BJ (cell line): ENCODE measurements at regions of chr1 and their contacts with region 1.

Region 1: DNA sequence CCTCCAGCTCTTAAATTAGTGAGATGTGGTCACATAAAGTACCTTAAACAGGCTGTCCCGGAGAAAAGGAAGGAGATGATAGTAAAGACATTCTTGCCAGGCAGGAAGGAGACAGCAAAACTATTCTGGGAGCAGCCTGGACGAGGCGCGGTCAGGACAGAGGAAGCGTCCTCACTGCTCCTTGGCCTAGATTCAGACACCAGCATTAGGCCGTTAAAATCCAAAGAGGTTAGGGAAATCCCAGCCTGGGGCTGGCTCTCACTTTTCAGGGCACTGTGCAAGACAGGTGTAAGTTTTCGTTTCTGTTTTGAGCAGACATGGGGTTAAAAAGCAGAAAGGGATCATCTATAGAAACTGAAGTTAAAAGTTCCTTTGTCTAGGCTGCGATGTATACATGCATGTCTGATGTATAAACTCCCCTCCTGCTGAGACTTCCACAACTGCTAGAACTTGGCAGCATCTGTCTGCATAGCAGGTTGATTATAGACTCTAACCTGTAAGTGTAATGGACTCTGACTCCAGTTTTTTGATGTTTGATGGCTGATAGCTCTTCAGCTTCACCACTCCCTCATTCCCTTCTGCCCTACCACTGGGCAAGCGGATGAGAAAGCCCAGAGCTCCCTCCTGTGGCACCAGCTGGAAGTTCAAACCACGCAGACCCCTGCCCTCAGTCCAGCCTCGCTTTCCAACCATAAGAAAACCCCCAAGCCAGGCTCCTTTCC is 21.5 kb downstream of the STPG1 start:
- DNase-seq: no peak
- H3K4me3 ChIP-seq: no peak overlapping the region
- H3K27me3 ChIP-seq: no peaks in the 10 kb centered on the region
- CTCF ChIP-seq: peak; percentile 84

Region 2: GRCh38 chr1:24150234-24151174 is 241.5 kb before region 1 on chr1:
- CTCF ChIA-PET with region 1: interaction called, 36 read pairs
- POLR2A ChIA-PET with region 1: no interaction called
- DNase-seq: no peak
- H3K4me3 ChIP-seq: no peak overlapping the region
- H3K27me3 ChIP-seq: peaks cover 9% of the 10 kb centered on the region
- CTCF ChIP-seq: peak; percentile 91

Region 3: DNA sequence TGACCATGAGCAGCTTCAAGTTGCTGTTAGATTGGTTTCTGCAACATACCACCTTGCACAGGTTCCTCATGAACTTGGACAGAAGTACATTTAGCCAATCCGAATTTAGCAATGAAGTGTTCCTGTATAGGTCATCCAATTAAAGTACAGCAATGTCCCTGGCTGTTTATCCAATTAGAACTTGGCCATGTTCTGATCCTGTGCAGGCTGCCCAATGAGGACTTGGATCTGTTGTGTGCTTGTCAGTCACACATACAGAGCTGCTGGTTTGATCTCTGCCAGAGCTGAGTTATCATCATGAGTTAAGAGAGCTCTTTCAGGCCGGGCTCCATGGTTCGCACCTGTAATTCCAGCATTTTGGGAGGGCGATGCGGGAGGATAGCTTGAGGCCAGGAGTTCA is 183.0 kb before region 1 on chr1:
- CTCF ChIA-PET with region 1: interaction called, 50 read pairs
- POLR2A ChIA-PET with region 1: no interaction called
- DNase-seq: no peak
- H3K4me3 ChIP-seq: no peak overlapping the region
- H3K27me3 ChIP-seq: peaks cover 9% of the 10 kb centered on the region
- CTCF ChIP-seq: no peak

Region 4: DNA sequence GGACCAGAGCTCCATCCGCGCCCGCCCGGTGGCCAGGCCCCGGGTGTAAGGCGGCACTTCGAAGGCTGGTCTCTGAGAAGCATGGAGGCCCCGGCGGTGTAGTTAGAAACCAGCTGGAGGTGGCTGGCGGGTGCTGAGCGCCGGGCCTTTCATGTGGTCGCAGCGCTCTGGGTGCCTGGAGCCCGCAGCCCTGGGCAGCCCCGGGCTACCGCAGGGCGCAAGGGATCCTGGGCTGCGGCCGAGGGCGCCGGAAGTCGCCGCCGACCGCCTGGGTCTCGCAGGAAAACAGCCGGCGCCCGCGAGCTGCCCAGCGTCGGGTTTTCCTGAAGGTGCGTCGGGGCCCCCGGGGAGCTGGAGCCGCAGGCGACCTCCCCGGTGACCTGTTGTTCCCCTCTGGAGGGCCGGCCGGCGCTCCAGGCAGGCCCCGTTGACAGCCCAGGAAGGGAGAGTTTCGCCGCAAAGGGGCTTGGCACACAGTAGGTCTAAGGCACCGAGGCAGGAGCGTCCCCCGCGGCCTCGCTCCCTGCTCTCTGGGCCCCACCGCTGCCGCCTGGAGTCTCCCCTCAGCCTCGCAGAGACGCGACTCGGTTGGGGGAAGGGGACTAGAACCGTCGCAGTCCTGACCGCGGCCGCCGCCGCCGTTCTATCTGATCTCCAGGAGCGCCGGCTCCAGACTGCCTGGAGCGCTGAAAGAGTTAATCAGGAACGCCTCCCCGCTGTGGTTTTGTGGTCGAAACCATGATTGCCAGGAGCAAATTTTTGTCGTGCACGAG is 70.2 kb before region 1 on chr1:
- CTCF ChIA-PET with region 1: interaction called, 16 read pairs
- POLR2A ChIA-PET with region 1: no interaction called
- DNase-seq: peak; percentile 31
- H3K4me3 ChIP-seq: peak overlapping the region; percentile 42
- H3K27me3 ChIP-seq: peaks cover 67% of the 10 kb centered on the region
- CTCF ChIP-seq: no peak

Region 5: GRCh38 chr1:24403806-24404205 is 11.8 kb after region 1 on chr1:
- CTCF ChIA-PET with region 1: interaction called, 26 read pairs
- POLR2A ChIA-PET with region 1: no interaction called
- DNase-seq: no peak
- H3K4me3 ChIP-seq: no peak overlapping the region
- H3K27me3 ChIP-seq: no peaks in the 10 kb centered on the region
- CTCF ChIP-seq: no peak

Region 6: DNA sequence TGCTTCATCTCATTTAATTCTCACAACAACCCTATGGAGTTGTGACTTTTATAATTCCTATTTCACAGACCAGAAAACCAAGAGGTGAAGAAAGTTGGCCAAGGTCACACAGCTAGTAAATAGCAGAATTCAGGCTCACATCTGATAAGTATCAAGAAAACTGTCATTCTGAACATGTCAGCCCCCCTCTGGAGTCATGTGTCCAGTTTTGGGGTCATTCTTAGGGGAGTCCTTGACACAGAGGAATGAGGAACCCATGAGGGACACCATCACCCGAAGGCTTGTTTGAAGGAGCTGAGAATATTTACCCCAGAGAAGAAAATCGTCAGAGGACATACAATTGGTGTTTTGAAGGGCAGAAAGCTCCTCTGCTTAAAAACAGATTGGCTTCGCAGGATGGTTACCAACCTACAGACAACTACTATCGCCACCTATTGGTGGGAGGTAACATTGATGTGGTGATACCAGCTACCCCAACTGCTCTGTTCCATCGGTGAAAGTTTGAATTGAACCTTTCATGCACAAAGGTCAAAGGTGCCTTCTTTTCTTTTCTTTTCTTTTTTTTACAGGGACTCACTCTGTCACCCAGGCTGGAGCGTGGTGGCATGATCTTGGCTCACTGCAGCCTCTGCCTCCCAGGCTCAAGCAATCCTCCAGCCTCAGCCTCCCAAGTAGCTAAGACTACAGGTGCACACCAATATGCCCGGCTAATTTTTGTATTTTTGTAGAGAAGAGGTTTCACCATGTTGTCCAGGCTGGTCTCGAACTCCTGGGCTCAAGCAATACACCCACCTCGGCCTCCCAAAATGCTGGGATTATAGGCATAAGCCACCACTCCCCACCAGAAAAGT is 195.2 kb after region 1 on chr1:
- CTCF ChIA-PET with region 1: interaction called, 33 read pairs
- POLR2A ChIA-PET with region 1: no interaction called
- DNase-seq: no peak
- H3K4me3 ChIP-seq: no peak overlapping the region
- H3K27me3 ChIP-seq: peaks cover 8% of the 10 kb centered on the region
- CTCF ChIP-seq: peak; percentile 76